AG04449 (cell line): ENCODE measurements at regions of chr2 and their contacts with region 1.

Region 1: DNA sequence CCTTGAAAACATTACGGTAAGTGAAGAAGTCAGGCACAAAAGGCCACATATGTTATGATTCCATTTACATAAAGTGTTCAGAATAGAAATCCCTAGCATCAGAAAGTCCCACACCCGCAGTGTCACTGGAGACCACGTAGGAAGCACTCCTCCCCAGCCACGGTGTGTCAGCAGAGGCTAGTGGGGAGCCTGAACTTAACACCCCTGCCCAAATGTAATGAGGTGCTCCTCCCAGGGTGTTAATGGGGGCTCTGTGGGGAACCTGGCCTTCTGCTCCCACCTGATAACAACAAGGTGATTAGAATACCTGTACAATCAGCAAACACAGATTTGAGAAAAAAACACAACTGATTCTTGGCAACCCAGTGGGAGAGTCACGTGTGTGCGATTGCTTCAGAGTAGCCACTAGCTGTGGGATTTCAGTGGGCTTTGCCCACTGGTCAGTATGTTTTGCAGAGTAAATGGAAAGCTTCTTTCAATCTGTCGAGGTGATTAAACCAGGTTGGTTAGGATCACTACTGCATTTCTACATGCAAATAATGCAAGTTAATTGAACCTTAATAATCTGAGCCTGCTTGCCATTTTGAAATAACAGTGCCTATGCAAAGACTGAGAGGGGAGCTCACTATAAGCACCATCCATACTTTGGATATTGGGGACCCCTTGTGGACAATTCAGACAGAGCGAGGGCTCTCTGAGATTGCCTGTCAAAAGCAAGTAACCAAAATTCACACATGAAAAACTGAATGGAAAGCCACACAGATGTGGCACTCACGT is 20.6 kb upstream of the ATRAID start:
- DNase-seq: no peak
- H3K4me3 ChIP-seq: no peak overlapping the region
- CTCF ChIP-seq: peak; percentile 71

Region 2: DNA sequence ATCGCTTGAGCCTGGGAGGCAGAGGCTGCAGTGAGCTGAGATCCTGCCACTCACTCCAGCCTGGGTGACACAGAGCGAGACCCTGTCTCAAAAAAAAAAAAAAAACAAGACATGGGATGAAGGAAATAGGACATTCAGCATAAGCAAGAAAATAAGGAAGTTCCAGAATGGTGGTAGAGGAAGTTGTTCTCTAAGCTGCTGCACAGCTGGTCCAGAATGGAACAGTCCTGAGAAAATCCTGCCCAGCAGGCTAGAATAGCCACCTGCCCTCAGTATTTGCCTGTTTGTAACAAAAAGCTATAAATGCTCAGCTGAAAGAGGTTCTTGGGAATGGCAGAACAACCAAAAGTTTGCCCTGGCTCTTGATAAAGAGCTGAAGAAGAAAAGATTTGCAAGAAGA is 231.9 kb before region 1 on chr2:
- CTCF ChIA-PET with region 1: interaction called, 11 read pairs
- POLR2A ChIA-PET with region 1: no interaction called
- DNase-seq: no peak
- H3K4me3 ChIP-seq: no peak overlapping the region
- CTCF ChIP-seq: no peak

Region 3: DNA sequence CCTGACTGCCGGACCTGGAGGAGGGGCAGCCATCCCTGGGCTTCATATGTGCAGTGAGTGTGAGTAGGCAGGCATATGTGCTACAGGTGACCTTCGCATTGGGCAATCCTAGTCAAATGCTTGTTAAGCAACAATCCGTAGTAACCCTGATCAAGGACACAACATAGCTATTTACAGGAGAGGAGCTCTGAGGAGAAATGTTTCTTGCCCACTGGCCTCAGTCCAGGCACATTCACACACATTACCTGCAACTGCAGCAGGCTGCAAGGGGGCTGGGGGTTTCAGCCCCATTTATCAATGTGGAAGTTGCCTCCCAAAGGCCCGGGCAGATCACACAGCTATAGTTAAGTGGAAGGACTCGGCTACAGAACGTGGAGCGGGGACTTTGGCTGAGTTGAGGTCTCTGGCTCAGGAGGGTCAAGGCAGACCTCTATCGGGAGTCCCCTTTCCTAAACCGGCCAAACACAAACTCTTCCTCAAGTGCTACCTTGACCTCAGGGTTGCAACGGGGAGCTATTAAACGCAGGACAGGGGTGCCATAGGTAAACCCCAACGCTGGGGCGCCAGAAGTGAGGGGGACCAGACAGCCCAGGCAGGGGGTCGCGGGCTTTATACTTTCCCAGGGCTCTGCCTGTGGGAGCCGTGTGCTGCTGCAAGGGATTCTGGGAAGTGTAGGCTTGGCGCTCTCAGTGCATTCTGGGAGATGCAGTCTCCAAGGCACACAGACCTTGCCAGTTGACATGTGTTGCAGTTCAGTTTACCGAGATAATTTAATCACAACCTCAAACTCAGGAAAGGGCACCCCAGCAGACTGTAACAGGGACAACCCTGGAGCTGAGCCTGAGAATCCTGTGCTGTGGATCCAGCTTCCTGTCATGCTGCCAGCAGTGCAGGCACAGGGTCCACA is 95.2 kb before region 1 on chr2:
- CTCF ChIA-PET with region 1: interaction called, 217 read pairs
- POLR2A ChIA-PET with region 1: no interaction called
- DNase-seq: no peak
- H3K4me3 ChIP-seq: peak overlapping the region; percentile 23
- CTCF ChIP-seq: no peak

Region 4: DNA sequence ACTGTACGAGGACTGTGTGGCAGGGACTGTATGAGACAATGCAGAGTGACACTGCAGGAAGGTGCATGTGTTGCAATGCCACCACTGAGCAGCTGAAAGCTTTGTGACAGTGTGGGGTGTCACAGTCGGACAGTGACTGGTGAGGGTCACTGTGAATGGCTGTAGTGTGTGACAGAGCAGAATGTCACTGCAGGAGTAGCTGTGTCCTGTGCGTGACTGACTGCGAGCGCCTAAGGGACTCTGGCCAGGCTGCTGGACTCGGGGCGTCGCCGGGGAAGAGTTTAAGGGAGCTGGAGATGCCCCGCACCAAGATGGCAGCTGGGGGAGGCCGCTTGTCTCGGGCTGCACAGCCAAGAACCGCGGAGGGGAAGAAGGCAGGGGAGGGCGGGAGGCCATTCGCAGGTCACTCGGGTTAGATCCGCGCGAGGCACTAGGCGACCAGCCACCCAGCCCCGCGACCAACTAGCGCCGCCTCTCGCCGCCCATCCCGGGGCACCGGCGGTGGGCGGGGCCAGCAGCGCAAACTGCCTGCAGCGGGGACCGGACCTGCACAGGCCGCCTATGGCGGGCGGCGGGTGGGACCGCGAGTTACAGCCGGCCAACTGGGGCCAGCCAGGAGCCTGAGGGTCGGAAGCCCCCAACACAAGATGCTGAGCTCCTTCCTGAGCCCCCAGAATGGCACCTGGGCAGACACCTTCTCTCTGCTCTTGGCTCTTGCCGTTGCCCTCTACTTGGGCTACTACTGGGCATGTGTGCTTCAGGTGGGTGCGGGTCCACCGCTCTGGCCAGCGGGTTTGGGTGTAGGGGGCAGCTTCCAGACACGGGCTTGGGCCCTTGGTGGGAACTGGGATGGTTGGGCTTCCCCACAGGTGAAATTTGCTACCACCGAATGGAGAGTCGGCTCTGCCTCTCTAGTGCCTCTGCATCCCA is 67.7 kb before region 1 on chr2 and contains the start of gene ABHD1:
- CTCF ChIA-PET with region 1: interaction called, 12 read pairs
- POLR2A ChIA-PET with region 1: no interaction called
- DNase-seq: no peak
- H3K4me3 ChIP-seq: peak within 1 kb of the TSS; percentile 53
- CTCF ChIP-seq: no peak

Region 5: GRCh38 chr2:27170581-27171333 is 20.5 kb before region 1 on chr2:
- CTCF ChIA-PET with region 1: interaction called, 53 read pairs
- POLR2A ChIA-PET with region 1: no interaction called
- DNase-seq: no peak
- H3K4me3 ChIP-seq: no peak overlapping the region
- CTCF ChIP-seq: no peak

Region 6: DNA sequence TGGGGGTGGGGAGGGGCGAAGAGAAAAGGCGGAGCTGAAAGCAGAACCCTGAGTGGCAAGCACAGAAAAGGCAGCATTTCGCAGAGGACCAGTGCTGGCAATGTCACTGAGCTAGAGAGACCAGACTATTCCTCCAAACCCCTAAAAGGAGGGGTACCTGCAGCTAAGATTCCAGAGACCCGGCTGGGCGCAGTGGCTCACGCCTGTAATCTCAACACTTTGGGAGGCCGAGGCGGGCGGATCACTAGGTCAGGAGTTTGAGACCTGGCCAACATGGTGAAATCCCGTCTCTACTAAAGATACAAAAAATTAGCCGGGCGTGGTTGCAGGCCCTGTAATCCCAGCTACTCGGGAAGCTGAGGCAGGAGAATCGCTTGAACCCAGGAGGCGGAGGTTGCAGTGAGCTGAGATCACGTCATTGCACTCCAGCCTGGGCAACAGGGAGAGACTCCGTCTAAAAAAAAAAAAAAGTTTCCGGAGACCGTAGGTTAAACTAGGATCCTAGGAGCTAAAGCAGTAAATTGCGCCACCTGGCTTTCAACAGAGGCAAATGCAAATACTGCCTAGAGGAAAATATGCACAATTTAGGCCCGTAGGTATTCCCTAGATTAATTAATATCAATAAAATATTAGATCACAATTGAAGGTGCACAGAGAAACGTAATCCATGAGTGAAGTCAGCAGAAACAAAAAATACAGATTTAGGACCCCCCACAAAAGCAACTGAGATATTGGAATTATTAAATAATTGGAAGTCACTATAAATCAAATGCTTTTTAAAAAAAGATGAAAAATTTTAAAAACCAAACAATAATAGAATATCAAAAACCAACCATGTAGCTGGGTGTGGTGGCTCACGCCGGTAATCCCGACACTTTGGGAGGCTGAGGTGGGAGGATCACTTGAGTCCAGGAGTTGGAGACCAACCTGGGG is 112.1 kb after region 1 on chr2:
- CTCF ChIA-PET with region 1: interaction called, 14 read pairs
- POLR2A ChIA-PET with region 1: no interaction called
- DNase-seq: no peak
- H3K4me3 ChIP-seq: no peak overlapping the region
- CTCF ChIP-seq: peak; percentile 65